K562 (cell line): ENCODE measurements at regions of chr12 and their contacts with region 1.

Region 1: DNA sequence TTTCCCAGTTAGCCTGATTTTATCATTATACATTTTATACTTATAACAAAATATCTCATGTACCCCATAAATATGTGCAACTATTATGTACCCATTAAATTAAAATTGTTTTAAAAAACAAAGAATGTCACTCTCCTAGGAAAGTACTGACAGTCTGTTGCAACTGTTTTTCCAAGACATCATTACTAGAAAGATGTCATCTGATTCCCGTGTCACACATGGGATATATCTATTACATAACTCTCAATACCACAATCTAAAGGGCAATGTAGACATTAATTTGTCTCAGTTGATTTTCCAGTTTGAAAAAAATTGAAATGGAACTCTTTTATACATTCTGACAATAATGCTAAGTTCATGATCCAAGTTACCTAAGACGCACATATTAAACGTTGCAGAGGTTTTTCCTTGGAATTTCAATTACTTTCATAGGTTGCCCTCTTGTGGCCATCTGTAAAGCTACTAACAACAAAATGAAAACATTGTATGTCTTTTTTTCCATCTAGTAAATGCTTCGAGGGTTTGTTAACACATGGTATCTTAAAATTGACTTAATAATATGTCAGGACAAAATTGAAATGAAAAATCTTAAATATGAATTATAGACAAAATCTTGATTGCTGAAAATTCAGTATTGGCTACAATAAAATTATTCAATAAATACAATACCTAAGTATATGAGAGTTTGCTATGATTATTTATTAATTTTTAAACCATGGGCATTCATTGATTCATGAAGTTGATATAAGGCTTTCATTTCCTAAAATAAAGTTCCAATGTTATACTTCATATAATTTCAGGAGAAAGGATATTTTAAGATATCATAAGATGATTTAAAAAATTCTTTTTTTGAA is 131.6 kb downstream of the PPFIA2 start:
- DNase-seq: peak; percentile 5 to 12 (median 8)
- ATAC-seq: no peak
- H3K4me3 ChIP-seq: no peak overlapping the region
- H3K27ac ChIP-seq: no peak overlapping the region
- H3K4me1 ChIP-seq: no peaks in the 10 kb centered on the region
- H3K27me3 ChIP-seq: no peaks in the 10 kb centered on the region
- CTCF ChIP-seq: peak in 2 of 3 experiments; percentile 16 to 34; a peak in 2 of 6 replicates
- EP300 ChIP-seq: no peak
- POLR2A ChIP-seq: no peak
- RAD21 ChIP-seq: peak; percentile 29 to 54; a peak in 3 of 4 replicates

Region 2: DNA sequence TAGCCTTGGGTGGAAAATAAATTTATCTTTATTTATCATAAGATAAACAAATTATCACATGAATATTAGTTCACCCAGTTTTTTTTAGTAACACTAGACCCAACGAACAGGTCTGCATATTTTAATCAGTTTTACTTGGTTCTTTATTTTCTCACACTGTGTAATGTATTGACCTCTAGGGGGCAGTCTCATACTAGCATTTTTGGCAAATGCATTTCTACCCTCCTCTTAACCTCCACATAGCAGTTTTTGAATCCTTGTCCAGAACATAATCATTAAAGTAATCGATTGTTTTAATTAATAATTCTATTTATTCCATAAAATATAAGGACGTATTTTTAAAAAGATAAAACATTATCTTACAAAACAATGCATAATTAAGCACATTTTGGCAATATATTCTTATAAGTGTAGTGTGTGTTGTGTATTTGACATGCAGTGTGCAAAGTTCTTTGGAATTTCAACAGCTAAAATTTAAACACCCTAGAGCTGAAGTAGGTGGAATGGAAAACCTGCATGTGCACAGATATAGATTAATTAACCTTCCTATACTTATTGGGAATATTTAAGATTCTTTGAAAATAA is 1215.1 kb before region 1 on chr12:
- CTCF ChIA-PET with region 1: no interaction called
- POLR2A ChIA-PET with region 1: no interaction called
- in situ Hi-C with region 1: no loop called
- intact Hi-C with region 1: loop called (anchors 10 kb)
- DNase-seq: peak; percentile 14 to 42 (median 24)
- ATAC-seq: 0 out of 3 replicates have a peak, but pooled peaks have one; percentile 47
- H3K4me3 ChIP-seq: no peak overlapping the region
- H3K27ac ChIP-seq: no peak overlapping the region
- H3K4me1 ChIP-seq: no peaks in the 10 kb centered on the region
- H3K27me3 ChIP-seq: no peaks in the 10 kb centered on the region
- CTCF ChIP-seq: peak in 2 of 3 experiments; percentile 34 to 55; a peak in 3 of 6 replicates
- EP300 ChIP-seq: no peak
- POLR2A ChIP-seq: no peak
- RAD21 ChIP-seq: peak; percentile 43 to 64; a peak in 3 of 4 replicates